Stomach (tissue), 19 donors: ENCODE measurements at regions of chr3 and their contacts with region 1.

Region 1: GRCh38 chr3:183468424-183468823 is 40.0 kb upstream of the MCF2L2 start:
- DNase-seq: no peak
- H3K4me3 ChIP-seq: no peak overlapping the region
- H3K27ac ChIP-seq: no peak overlapping the region
- H3K4me1 ChIP-seq: peaks cover 0 to 9% (median 3%) of the 10 kb centered on the region in 4 donors
- H3K27me3 ChIP-seq: peaks cover 0 to 4% (median 0%) of the 10 kb centered on the region in 3 donors
- CTCF ChIP-seq: no peak
- EP300 ChIP-seq: no peak
- POLR2A ChIP-seq: no peak

Region 2: DNA sequence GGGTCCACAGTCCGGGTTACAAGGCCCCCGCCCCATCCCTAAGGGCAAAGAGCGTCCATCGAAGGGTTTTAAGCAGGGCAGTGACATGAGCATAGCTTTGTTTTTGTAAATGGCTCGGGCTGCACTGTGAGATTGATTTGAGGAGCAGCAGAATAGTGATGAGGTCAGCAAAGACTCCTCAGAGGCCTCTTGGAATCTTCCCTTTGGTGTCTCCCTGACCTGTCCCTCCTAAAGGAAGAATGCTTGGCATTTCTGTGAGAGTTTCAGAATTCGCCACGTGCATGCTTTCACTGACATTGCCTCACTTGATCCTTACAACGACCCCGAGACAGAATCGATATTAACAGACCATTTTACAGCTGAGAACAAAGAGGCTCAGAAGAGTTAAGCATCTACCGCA is 326.2 kb before region 1 on chr3:
- intact Hi-C with region 1: no loop called
- DNase-seq: no peak
- H3K4me3 ChIP-seq: no peak overlapping the region
- H3K27ac ChIP-seq: no peak overlapping the region
- H3K4me1 ChIP-seq: no peaks in the 10 kb centered on the region
- H3K27me3 ChIP-seq: peaks cover 0 to 38% (median 8%) of the 10 kb centered on the region in 3 donors
- CTCF ChIP-seq: no peak
- EP300 ChIP-seq: no peak
- POLR2A ChIP-seq: no peak

Region 3: GRCh38 chr3:183306798-183307671 is 161.4 kb before region 1 on chr3:
- intact Hi-C with region 1: no loop called
- DNase-seq: peak; percentile 94 to 95
- H3K4me3 ChIP-seq: no peak overlapping the region
- H3K27ac ChIP-seq: peak overlapping the region; percentile 71 to 87 (median 81)
- H3K4me1 ChIP-seq: peaks cover 7 to 38% (median 16%) of the 10 kb centered on the region in 4 donors
- H3K27me3 ChIP-seq: no peaks in the 10 kb centered on the region
- CTCF ChIP-seq: no peak
- EP300 ChIP-seq: no peak
- POLR2A ChIP-seq: no peak

Region 4: GRCh38 chr3:183339461-183340079 is 128.9 kb before region 1 on chr3:
- intact Hi-C with region 1: no loop called
- DNase-seq: no peak
- H3K4me3 ChIP-seq: no peak overlapping the region
- H3K27ac ChIP-seq: no peak overlapping the region
- H3K4me1 ChIP-seq: no peaks in the 10 kb centered on the region
- H3K27me3 ChIP-seq: no peaks in the 10 kb centered on the region
- CTCF ChIP-seq: no peak
- EP300 ChIP-seq: no peak
- POLR2A ChIP-seq: no peak

Region 5: GRCh38 chr3:183394156-183394555 is 74.3 kb before region 1 on chr3:
- intact Hi-C with region 1: no loop called
- DNase-seq: no peak
- H3K4me3 ChIP-seq: no peak overlapping the region
- H3K27ac ChIP-seq: no peak overlapping the region
- H3K4me1 ChIP-seq: no peaks in the 10 kb centered on the region
- H3K27me3 ChIP-seq: peaks cover 0 to 16% (median 0%) of the 10 kb centered on the region in 3 donors
- CTCF ChIP-seq: no peak
- EP300 ChIP-seq: no peak
- POLR2A ChIP-seq: no peak

Region 6: GRCh38 chr3:183766745-183767606 is 298.6 kb after region 1 on chr3:
- intact Hi-C with region 1: loop called (anchors 5 kb)
- DNase-seq: peak; percentile 83 to 92
- H3K4me3 ChIP-seq: no peak overlapping the region
- H3K27ac ChIP-seq: no peak overlapping the region
- H3K4me1 ChIP-seq: peaks cover 0 to 25% (median 11%) of the 10 kb centered on the region in 4 donors
- H3K27me3 ChIP-seq: no peaks in the 10 kb centered on the region
- CTCF ChIP-seq: peak in 5 of 7 experiments; percentile 55 to 80 (median 75)
- EP300 ChIP-seq: no peak
- POLR2A ChIP-seq: no peak